ENCODE measurements at regions of chr15 and their contacts with region 1.

Region 1: GRCh38 chr15:69576035-69576526 is 123.5 kb downstream of the RPLP1 start:
- DNase-seq: peak; percentile 38
- H3K4me3 Mint-ChIP-seq: no peak overlapping the region
- H3K27ac Mint-ChIP-seq: no peak overlapping the region
- H3K4me1 Mint-ChIP-seq: peaks cover 29% of the 10 kb centered on the region
- H3K27me3 Mint-ChIP-seq: peaks cover 10% of the 10 kb centered on the region

Region 2: DNA sequence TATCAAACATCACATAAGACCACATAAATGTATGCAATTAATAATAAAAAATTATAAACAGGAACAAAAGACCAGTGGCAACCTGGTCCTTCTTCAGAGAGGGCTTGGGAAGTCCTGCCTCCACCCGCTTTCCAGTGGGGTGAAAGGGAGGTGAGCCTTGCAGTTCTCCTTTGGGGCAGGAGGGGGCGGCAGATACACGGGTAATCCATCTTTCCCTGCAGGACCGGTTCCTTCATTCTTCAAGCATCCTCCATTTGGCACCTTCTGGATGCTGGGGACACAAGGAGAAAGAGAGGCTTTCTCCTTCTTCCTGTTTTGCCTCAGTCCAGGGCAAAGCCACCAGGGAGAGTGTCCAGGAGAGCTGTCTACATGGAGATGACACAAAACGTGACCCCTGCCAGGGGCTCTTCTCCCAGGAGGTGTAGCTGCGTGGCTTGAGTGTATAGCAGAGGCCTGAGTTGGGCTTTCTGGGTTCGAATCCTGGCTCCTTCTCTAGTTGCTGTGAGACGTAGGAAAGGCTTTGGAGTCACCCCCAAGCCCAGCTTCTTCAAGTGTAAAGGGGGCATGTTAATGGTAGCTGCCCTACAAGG is 100.2 kb before region 1 on chr15:
- intact Hi-C with region 1: loop called (anchors 5 kb)
- DNase-seq: peak; percentile 59
- H3K4me3 Mint-ChIP-seq: no peak overlapping the region
- H3K27ac Mint-ChIP-seq: no peak overlapping the region
- H3K4me1 Mint-ChIP-seq: peaks cover 2% of the 10 kb centered on the region
- H3K27me3 Mint-ChIP-seq: peaks cover 23% of the 10 kb centered on the region

Region 3: DNA sequence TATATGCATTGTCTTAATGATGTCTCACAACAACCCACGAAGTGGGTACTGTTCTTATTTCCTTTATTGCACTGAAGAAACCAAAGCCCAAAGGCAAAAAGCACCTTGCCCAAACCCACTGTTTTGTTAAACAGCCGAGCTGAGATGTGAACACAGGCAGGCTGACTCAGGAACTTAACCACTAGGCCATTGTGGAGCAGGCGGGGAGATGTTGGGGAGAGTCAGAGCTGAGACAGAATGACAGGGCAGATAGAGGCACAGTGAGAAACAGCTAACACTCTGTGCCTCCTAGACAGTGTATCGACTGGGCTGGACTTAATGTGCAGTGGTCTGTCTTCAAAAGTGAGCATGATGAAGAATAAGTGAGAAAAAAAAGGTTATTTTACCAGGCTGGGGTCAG is 67.0 kb before region 1 on chr15:
- intact Hi-C with region 1: no loop called
- DNase-seq: no peak
- H3K4me3 Mint-ChIP-seq: no peak overlapping the region
- H3K27ac Mint-ChIP-seq: no peak overlapping the region
- H3K4me1 Mint-ChIP-seq: peaks cover 9% of the 10 kb centered on the region
- H3K27me3 Mint-ChIP-seq: peaks cover 2% of the 10 kb centered on the region

Region 4: DNA sequence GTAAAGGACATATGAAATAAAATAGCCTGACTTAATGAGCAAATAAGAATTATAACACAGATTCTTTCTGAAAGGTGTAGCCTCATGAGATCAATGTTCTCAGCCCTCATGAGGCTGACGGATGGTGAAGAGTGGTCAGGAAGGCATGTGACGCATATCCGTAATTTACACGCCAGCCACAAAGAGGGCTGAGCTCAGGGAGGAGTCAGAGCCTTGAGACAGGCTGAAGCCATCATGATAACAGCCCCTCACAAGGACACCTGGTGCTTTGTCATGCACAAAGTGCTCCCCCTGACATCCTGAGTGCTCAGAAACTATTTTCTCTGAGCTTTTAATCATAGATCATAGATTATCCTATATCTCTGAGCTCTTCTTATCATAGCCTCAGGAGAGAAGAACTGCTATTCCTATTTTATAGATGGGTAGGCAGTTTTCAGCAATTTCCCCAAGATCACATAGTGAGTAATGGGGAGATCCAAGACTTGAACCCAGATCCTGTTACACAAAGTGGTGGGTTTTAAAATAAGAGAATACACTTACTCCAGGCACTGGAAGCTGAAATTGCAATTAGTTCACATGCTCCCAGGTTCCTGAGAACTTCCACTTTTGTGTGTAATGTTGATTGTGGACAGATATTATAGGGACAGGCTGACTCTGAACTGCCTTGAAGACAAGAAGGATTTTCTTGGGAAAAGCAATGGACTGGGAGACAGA is 143.6 kb after region 1 on chr15:
- intact Hi-C with region 1: loop called (anchors 5 kb)
- DNase-seq: peak; percentile 55
- H3K4me3 Mint-ChIP-seq: no peak overlapping the region
- H3K27ac Mint-ChIP-seq: no peak overlapping the region
- H3K4me1 Mint-ChIP-seq: peaks cover 73% of the 10 kb centered on the region
- H3K27me3 Mint-ChIP-seq: peaks cover 10% of the 10 kb centered on the region

Region 5: DNA sequence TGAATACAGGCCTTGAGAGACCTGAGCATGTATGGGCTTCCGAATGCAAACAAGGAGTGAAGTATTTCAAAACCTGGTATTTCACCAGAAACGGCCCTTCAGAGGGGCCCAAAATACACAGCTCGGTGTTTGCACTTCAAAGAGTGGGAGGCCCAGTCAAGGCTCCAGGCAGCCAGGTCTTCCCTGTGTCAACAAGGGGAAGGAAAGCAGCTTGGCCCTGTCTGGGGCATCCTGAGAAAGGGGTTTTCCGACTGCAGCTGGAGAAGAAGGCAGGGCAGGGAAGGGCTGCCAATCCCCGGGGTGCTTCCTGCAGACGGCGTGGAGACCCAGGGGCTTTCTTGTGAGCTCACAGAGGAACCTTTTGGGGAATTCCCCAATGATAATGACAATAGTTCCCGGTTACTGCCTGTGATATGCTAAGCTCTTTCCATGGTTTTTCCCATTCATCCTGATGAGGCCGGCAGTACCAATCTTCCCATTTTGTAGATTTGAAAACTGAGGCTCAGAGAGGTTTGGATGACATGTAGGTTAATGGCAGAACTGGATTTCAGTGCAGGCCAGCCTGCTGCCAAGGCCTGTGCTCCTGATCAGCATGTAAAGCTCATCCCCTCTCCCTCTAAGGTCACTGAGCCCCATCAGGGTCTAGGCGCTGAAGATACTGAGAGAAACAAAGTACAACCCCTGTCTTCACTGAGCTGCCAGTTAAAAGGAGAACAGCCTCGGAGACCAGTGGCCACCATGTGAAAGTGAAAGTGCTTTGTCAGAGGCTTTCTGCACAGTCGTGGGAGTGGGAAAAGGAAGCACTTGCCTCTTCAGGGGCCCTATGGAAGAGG is 564.7 kb after region 1 on chr15:
- intact Hi-C with region 1: loop called (anchors 1 kb)
- DNase-seq: no peak
- H3K4me3 Mint-ChIP-seq: no peak overlapping the region
- H3K27ac Mint-ChIP-seq: peak overlapping the region; percentile 40
- H3K4me1 Mint-ChIP-seq: peaks cover 34% of the 10 kb centered on the region
- H3K27me3 Mint-ChIP-seq: peaks cover 56% of the 10 kb centered on the region

Region 6: GRCh38 chr15:70259028-70259424 is 682.9 kb after region 1 on chr15:
- intact Hi-C with region 1: loop called (anchors 10 kb)
- DNase-seq: peak; percentile 37
- H3K4me3 Mint-ChIP-seq: no peak overlapping the region
- H3K27ac Mint-ChIP-seq: no peak overlapping the region
- H3K4me1 Mint-ChIP-seq: peaks cover 35% of the 10 kb centered on the region
- H3K27me3 Mint-ChIP-seq: peaks cover 46% of the 10 kb centered on the region

Measured in activated T-helper 2 cell treated with anti-CD3 and anti-CD28 coated beads, Interferon-gamma antibody, Interleukin-2, Interleukin-4, amounts not matched to agents 10 μg/mL and 5 μg/mL and 100 μg/mL, durations not matched to agents 14 hours and 24 hours and 36 hours (primary cell).